Mammary epithelial cell (primary cell): ENCODE measurements at regions of chr19 and their contacts with region 1.

Region 1: DNA sequence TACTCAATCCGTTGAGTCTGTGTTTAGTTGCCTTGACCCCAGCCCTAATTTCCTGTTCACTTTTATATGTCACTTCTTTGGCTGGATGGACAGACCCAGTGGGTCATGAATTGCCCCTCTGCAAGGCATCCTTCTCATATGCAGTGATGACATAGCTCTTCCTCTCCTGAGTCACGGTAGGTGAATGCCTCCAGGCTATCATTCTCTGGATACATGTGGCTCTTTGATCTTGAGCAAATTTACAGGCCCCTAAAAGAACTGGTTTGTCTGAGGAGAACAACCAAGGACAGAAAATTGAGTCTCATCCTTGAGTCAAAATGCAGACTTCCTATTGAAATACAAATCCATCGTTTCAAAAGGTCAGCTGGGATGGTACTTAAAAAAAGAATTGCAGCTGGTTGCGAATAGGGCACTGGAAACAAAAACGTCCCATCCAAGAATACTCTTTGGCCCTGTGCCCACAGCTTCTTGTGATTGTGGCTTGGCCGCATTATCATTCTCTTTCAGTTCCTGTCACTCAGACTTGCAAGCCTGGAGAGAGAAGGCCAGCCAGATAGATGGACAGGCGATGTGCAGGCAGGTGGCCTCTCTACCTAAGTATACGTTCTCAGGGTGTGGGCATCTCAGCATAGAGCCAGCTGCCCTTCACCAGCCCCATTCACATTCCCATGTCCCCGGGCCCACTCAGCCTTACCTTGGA is 208.7 kb upstream of the ZNF536 start:
- DNase-seq: no peak
- H3K4me3 ChIP-seq: no peak overlapping the region
- H3K27ac ChIP-seq: no peak overlapping the region
- H3K4me1 ChIP-seq: no peaks in the 10 kb centered on the region
- H3K27me3 ChIP-seq: no peaks in the 10 kb centered on the region
- CTCF ChIP-seq: no peak

Region 2: DNA sequence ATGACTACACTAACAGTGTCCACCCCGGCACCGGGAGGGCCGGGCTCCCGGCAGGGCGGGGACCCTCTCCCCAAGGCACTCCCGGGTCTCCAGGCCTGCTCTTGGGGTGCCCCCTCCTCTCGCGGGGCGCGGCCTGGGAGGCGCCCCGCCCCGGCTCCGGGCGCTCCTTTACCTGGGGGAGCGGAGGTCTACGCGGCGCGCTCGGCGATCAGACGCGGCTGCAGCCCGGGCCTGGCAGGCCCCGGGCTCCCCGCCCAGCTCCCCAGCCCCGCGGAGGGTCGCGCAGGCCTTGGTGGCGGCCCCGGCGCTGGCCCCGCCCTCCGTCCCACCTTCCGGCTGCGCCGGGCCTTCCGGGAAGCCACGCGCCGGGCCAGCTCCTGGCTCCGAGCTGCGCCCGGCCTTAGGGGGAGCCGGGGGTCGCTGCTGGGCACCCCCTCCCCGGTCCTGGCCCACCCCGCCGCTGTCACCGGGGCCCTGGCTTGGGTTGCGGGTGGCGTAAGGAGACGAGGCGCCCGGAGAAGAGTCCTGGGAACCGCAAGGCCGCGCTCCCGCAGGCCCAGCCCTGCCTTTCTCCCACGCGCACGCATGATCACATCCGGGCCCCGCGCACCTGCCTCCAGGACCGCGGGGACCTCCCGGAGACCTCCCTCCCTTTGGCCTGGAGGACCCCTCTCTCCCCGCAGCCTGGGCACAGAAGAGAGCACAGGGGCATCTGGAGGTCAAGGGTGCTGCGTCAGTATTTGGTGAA is 448.4 kb before region 1 on chr19 and contains the start of gene C19orf12:
- CTCF ChIA-PET with region 1: no interaction called
- dilution Hi-C with region 1: no loop called
- in situ Hi-C with region 1: no loop called
- intact Hi-C with region 1: no loop called
- DNase-seq: peak; percentile 38
- H3K4me3 ChIP-seq: peak within 1 kb of the TSS; percentile 81 to 97 (median 87)
- H3K27ac ChIP-seq: peak within 1 kb of the TSS; percentile 71
- H3K4me1 ChIP-seq: peaks cover 3% of the 10 kb centered on the region
- H3K27me3 ChIP-seq: no peaks in the 10 kb centered on the region
- CTCF ChIP-seq: no peak
- total RNA-seq, gene C19orf12: 19.6 to 24.5 TPM

Region 3: GRCh38 chr19:30111021-30111855 is 52.3 kb before region 1 on chr19:
- CTCF ChIA-PET with region 1: no interaction called
- dilution Hi-C with region 1: no loop called
- in situ Hi-C with region 1: no loop called
- intact Hi-C with region 1: no loop called
- DNase-seq: no peak
- H3K4me3 ChIP-seq: no peak overlapping the region
- H3K27ac ChIP-seq: no peak overlapping the region
- H3K4me1 ChIP-seq: no peaks in the 10 kb centered on the region
- H3K27me3 ChIP-seq: no peaks in the 10 kb centered on the region
- CTCF ChIP-seq: no peak

Region 4: GRCh38 chr19:30178721-30179402 is 15.3 kb after region 1 on chr19:
- CTCF ChIA-PET with region 1: no interaction called
- dilution Hi-C with region 1: no loop called
- in situ Hi-C with region 1: no loop called
- intact Hi-C with region 1: no loop called
- DNase-seq: no peak
- H3K4me3 ChIP-seq: no peak overlapping the region
- H3K27ac ChIP-seq: no peak overlapping the region
- H3K4me1 ChIP-seq: no peaks in the 10 kb centered on the region
- H3K27me3 ChIP-seq: no peaks in the 10 kb centered on the region
- CTCF ChIP-seq: no peak

Region 5: DNA sequence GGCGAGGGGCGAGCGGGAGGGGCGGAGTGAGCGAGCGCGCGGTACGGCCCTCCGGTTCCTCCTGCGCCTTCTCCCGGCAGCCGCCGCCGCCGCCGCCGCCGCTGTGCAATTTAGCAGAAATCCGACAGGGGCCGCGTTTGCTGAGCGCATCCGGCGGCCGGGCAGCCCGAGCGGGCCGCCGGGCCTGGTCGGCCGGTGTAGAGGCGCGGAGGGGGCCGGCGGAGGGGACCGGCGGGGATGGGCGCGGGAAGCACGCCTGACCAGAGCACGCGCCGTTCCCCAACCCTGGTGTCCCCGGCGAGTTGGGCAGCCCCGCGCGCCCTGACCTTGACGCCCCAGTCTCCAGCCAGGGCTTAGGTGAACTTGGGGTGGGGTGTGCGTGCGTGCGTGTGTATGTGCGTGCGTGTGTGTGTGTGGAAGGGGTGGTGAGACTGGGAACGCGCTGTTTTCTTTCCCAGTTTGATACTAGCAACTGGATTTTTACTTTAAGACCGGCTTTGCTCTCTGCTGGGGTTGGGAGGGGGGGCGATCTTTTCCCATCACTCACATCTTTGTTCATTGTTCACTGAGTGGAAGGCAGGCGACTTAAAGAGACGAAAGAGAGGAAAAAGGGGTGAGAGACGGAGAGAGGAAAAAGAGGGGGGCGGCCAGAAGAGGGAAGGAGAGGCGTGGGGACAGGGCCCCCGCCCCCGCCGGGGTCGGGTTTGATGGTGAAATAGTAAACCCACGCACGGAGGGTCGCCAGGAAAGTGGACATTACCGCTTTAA is 64.3 kb after region 1 on chr19:
- CTCF ChIA-PET with region 1: no interaction called
- dilution Hi-C with region 1: loop called (anchors 5 kb)
- in situ Hi-C with region 1: no loop called
- intact Hi-C with region 1: no loop called
- DNase-seq: peak; percentile 42
- H3K4me3 ChIP-seq: peak overlapping the region; percentile 37 to 50 (median 41)
- H3K27ac ChIP-seq: no peak overlapping the region
- H3K4me1 ChIP-seq: peaks cover 10% of the 10 kb centered on the region
- H3K27me3 ChIP-seq: peaks cover 45% of the 10 kb centered on the region
- CTCF ChIP-seq: peak; percentile 14 to 30